ENCODE measurements at regions of chr2 and their contacts with region 1.

Region 1: GRCh38 chr2:216163518-216163917 is 54.4 kb downstream of the XRCC5 start:
- DNase-seq: no peak
- ATAC-seq: no peak
- H3K4me3 Mint-ChIP-seq: no peak overlapping the region
- H3K27ac Mint-ChIP-seq: no peak overlapping the region
- H3K4me1 Mint-ChIP-seq: no peaks in the 10 kb centered on the region
- H3K27me3 Mint-ChIP-seq: no peaks in the 10 kb centered on the region
- CTCF ChIP-seq: no peak

Region 2: GRCh38 chr2:216130346-216130971 is 33.1 kb before region 1 on chr2:
- CTCF ChIA-PET with region 1: no interaction called
- POLR2A ChIA-PET with region 1: no interaction called
- intact Hi-C with region 1: loop called (anchors 5 kb)
- DNase-seq: no peak
- ATAC-seq: no peak
- H3K4me3 Mint-ChIP-seq: no peak overlapping the region
- H3K27ac Mint-ChIP-seq: no peak overlapping the region
- H3K4me1 Mint-ChIP-seq: peaks cover 5% of the 10 kb centered on the region
- H3K27me3 Mint-ChIP-seq: no peaks in the 10 kb centered on the region
- CTCF ChIP-seq: no peak

Region 3: GRCh38 chr2:216151313-216152030 is 12.0 kb before region 1 on chr2:
- CTCF ChIA-PET with region 1: no interaction called
- POLR2A ChIA-PET with region 1: interaction called, 4 read pairs
- intact Hi-C with region 1: loop called (anchors 2 kb)
- DNase-seq: no peak
- ATAC-seq: no peak
- H3K4me3 Mint-ChIP-seq: no peak overlapping the region
- H3K27ac Mint-ChIP-seq: no peak overlapping the region
- H3K4me1 Mint-ChIP-seq: no peaks in the 10 kb centered on the region
- H3K27me3 Mint-ChIP-seq: no peaks in the 10 kb centered on the region
- CTCF ChIP-seq: no peak

Region 4: GRCh38 chr2:216371756-216372702 is 208.5 kb after region 1 on chr2 and contains the start of gene MARCHF4:
- CTCF ChIA-PET with region 1: no interaction called
- POLR2A ChIA-PET with region 1: no interaction called
- intact Hi-C with region 1: no loop called
- DNase-seq: peak; percentile 50
- ATAC-seq: peak; percentile 65
- H3K4me3 Mint-ChIP-seq: peak within 1 kb of the TSS; percentile 11
- H3K27ac Mint-ChIP-seq: no peak within 1 kb of the TSS
- H3K4me1 Mint-ChIP-seq: peaks cover 12% of the 10 kb centered on the region
- H3K27me3 Mint-ChIP-seq: peaks cover 64% of the 10 kb centered on the region
- CTCF ChIP-seq: no peak
- total RNA-seq, gene MARCHF4: not detected in 2 replicates

Measured in activated B cell treated with CpG ODN at 0.5 μM for 24 hours (primary cell).